Naive thymus-derived CD4-positive, alpha-beta T cell (primary cell): ENCODE measurements at regions of chr17 and their contacts with region 1.

Region 1: DNA sequence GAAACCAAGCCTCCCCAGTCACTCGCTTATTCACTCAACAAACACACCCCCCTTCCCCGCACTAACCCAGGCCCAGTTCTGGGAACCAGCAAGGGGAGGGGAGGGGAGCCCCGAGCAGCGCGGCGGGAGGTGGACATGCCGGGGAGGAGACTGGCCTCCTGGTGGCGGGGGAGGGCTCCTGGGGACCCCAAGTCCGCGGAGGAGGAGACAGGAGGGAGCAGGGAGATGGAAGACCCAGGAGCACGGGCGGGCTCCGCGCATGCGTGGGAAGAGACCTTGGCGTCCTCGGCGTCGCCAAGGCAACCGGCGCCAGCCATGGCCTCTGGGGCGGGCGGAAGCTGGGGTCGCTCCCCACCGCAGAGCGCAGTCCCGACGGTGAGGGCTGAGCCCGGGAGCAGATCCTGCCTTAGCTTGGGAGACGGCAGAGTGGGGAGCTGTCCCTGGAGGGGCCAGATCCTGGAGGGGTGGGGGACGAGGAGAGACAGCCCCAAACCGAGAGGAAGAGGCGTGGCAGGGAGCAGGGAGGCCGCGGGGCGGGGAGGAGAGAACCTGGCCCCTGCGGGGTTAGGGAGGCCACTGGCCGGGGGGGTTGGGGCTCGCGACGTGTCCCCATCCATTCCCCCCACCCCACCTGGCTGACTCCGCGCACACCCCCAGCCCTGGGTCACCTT is at the start of gene PRR29:
- DNase-seq: peak; percentile 65 to 76 (median 71)
- ATAC-seq: peak; percentile 78
- H3K4me3 ChIP-seq: peak within 1 kb of the TSS; percentile 81
- H3K4me3 Mint-ChIP-seq: peak within 1 kb of the TSS; percentile 79 to 96 (median 90)
- H3K27ac ChIP-seq: peak within 1 kb of the TSS; percentile 53
- H3K27ac Mint-ChIP-seq: peak within 1 kb of the TSS; percentile 64 to 86 (median 82)
- H3K4me1 ChIP-seq: peaks cover 20 to 32% of the 10 kb centered on the region in 2 donors
- H3K4me1 Mint-ChIP-seq: peaks cover 30 to 51% (median 44%) of the 10 kb centered on the region in 7 donors
- H3K27me3 ChIP-seq: no peaks in the 10 kb centered on the region
- H3K27me3 Mint-ChIP-seq: peaks cover 0 to 17% (median 0%) of the 10 kb centered on the region in 5 donors
- total RNA-seq, gene PRR29: 0.29 to 2.8 (median 0.40) TPM in 3 of 5 experiments, not detected in the others

Region 2: DNA sequence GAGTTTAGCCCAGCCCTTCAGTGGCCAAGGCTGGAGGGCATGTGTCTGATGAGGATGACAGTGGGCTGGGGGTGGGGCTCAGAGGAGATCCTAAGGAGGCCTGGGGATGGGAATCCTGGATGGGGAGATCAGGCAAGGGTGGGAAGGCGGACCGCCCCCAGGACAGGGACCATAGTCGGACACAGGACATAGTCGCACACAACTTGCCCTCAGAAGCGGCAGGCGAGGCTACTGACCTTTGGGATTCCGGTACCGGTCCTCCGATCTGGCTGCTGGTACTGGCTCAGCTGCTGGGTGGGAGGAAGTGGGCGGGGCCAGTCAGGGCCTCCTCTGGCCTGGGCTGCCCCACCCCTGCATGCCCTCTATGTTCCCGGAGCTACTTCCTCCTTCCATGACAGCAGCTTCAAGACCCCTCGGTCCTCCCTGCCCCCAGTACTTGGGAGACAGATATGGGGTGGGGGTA is 67.1 kb before region 1 on chr17:
- CTCF ChIA-PET with region 1: no interaction called
- POLR2A ChIA-PET with region 1: no interaction called
- intact Hi-C with region 1: loop called in 1 of 2 experiments (anchors 5 kb)
- DNase-seq: peak; percentile 29 to 56 (median 48)
- ATAC-seq: peak; percentile 82
- H3K4me3 ChIP-seq: peak overlapping the region; percentile 85
- H3K4me3 Mint-ChIP-seq: peak overlapping the region; percentile 88 to 99 (median 96)
- H3K27ac ChIP-seq: peak overlapping the region; percentile 84
- H3K27ac Mint-ChIP-seq: peak overlapping the region; percentile 87 to 96 (median 93)
- H3K4me1 ChIP-seq: peaks cover 13 to 21% of the 10 kb centered on the region in 2 donors
- H3K4me1 Mint-ChIP-seq: peaks cover 11 to 28% (median 24%) of the 10 kb centered on the region in 7 donors
- H3K27me3 ChIP-seq: no peaks in the 10 kb centered on the region
- H3K27me3 Mint-ChIP-seq: peaks cover 0 to 5% (median 0%) of the 10 kb centered on the region in 5 donors

Region 3: DNA sequence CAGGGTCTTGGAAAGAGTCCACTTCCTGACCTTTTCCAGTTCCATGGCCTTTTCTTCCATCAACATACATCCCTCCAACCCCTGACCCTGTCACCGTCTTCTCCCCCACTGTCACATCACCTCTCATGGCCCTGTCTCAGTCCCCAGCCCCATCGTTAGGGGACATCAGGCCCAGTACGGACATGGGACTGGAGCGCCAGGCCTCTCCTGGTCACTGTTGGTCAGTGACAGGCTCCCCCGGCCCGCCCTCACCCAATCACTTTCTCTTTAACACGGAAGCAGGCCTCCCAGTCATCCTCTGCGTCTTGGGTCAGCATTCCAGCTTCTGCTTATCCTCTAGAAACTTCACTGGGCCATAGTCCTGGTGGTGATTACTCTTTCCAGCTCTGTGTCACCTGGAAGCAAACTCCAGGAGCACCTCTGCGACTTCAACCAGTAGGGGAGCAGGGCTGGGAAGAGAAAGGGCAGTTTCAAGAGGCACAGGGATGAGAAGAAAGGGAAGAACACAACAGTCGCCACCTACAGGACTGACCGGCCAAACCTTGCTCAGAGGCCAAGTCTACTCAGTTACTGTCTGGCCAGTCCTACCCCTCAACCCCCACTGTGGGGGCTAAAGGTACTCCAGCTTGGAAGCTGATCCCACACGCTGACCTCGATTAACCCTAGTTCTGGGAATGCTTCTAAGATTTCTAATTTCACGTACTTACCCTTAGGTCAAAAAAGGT is 38.2 kb after region 1 on chr17:
- CTCF ChIA-PET with region 1: no interaction called
- POLR2A ChIA-PET with region 1: no interaction called
- intact Hi-C with region 1: no loop called
- DNase-seq: no peak
- ATAC-seq: no peak
- H3K4me3 ChIP-seq: no peak overlapping the region
- H3K4me3 Mint-ChIP-seq: no peak overlapping the region
- H3K27ac ChIP-seq: no peak overlapping the region
- H3K27ac Mint-ChIP-seq: peak overlapping the region in 2 of 9 donors; percentile 6 to 42
- H3K4me1 ChIP-seq: no peaks in the 10 kb centered on the region
- H3K4me1 Mint-ChIP-seq: peaks cover 0 to 14% (median 0%) of the 10 kb centered on the region in 7 donors
- H3K27me3 ChIP-seq: no peaks in the 10 kb centered on the region
- H3K27me3 Mint-ChIP-seq: no peaks in the 10 kb centered on the region